ENCODE measurements at regions of chr11 and their contacts with region 1.

Region 1: DNA sequence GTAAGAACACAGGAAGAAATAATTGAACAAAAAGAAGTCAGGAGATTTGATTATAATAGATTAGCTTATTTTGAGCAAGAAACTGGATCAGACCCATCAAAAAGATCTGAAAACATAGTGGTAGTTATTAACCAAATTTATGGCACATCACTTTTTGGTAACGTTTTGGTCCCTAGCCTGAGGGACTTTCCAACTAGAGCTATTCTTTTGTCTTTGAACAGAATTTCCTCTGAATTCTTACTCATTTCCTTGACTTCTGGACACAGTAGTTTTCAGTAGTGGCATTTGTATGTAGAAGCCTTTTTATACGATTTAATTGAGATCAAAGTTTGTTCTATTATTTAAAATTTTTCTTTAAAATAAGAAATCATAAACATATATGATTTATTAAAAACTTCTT is 96.5 kb upstream of the PDGFD start:
- DNase-seq: no peak
- H3K4me3 ChIP-seq: no peak overlapping the region
- H3K27ac ChIP-seq: no peak overlapping the region
- H3K4me1 ChIP-seq: peaks cover 3% of the 10 kb centered on the region
- H3K27me3 ChIP-seq: no peaks in the 10 kb centered on the region
- CTCF ChIP-seq: no peak
- EP300 ChIP-seq: no peak
- POLR2A ChIP-seq: no peak

Region 2: GRCh38 chr11:104306862-104307474 is 46.5 kb after region 1 on chr11:
- intact Hi-C with region 1: loop called in 1 of 4 experiments (anchors 1 kb)
- DNase-seq: no peak
- H3K4me3 ChIP-seq: no peak overlapping the region
- H3K27ac ChIP-seq: no peak overlapping the region
- H3K4me1 ChIP-seq: no peaks in the 10 kb centered on the region
- H3K27me3 ChIP-seq: no peaks in the 10 kb centered on the region
- CTCF ChIP-seq: no peak
- EP300 ChIP-seq: no peak
- POLR2A ChIP-seq: no peak

Region 3: GRCh38 chr11:104327859-104328511 is 67.5 kb after region 1 on chr11:
- intact Hi-C with region 1: no loop called
- DNase-seq: no peak
- H3K4me3 ChIP-seq: no peak overlapping the region
- H3K27ac ChIP-seq: no peak overlapping the region
- H3K4me1 ChIP-seq: no peaks in the 10 kb centered on the region
- H3K27me3 ChIP-seq: no peaks in the 10 kb centered on the region
- CTCF ChIP-seq: no peak
- EP300 ChIP-seq: no peak
- POLR2A ChIP-seq: no peak

Measured in ovary (tissue), 10 donors.